CD4-positive, alpha-beta memory T cell (primary cell): ENCODE measurements at regions of chr6 and their contacts with region 1.

Region 1: DNA sequence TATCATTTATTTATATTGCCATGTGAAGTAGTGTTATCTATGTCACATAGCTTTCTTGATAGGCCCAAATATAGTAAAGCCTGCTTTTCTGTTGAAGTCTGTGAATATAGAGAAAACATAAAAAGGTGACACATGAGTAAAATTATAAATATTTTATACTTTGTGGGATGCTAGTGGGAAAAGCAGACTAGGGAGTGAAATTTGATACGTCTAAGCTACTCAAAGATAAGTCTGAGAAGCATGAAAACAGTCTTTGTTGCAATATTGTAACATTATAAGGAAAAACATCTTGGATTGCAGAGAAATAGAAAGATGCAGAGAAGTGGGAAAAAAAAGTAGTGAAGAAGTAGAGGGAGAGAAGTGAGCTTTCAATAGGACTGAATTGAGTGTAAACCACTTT is 75.4 kb downstream of the ZNF292 start:
- DNase-seq: no peak
- H3K4me3 ChIP-seq: no peak overlapping the region
- H3K4me3 Mint-ChIP-seq: no peak overlapping the region
- H3K27ac ChIP-seq: no peak overlapping the region
- H3K27ac Mint-ChIP-seq: peak overlapping the region in 1 of 7 donors; percentile 43
- H3K4me1 ChIP-seq: no peaks in the 10 kb centered on the region
- H3K4me1 Mint-ChIP-seq: peaks cover 0 to 18% (median 8%) of the 10 kb centered on the region in 4 donors
- H3K27me3 ChIP-seq: no peaks in the 10 kb centered on the region
- H3K27me3 Mint-ChIP-seq: no peaks in the 10 kb centered on the region

Region 2: DNA sequence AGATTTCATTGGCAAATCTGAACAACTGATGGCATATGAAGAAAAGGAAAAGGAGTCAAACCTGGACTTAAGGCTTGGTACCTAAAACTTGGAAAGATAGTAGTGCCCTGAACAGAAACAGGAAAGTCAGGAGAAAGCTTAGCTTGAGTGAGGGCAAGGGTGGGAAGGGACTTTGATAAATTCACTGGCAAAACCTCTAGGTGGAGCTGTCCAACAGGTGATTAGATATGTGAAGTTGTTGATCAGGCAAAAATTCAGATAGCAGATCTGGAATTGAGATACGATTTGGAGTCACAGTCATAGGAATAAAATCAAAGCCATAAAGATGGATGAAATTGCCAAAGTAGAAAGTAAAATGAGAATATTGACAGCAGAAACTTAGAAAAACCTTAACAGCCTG is 91.6 kb before region 1 on chr6:
- CTCF ChIA-PET with region 1: interaction called, 73 read pairs
- POLR2A ChIA-PET with region 1: no interaction called
- intact Hi-C with region 1: no loop called
- DNase-seq: peak; percentile 50 to 71 (median 68)
- H3K4me3 ChIP-seq: no peak overlapping the region
- H3K4me3 Mint-ChIP-seq: no peak overlapping the region
- H3K27ac ChIP-seq: no peak overlapping the region
- H3K27ac Mint-ChIP-seq: peak overlapping the region in 1 of 7 donors; percentile 80
- H3K4me1 ChIP-seq: no peaks in the 10 kb centered on the region
- H3K4me1 Mint-ChIP-seq: peaks cover 0 to 4% (median 3%) of the 10 kb centered on the region in 4 donors
- H3K27me3 ChIP-seq: no peaks in the 10 kb centered on the region
- H3K27me3 Mint-ChIP-seq: peaks cover 5 to 6% of the 10 kb centered on the region in 2 donors